ENCODE measurements at regions of chr5 and their contacts with region 1.

Region 1: GRCh38 chr5:90558344-90559192 is at the start of gene ADGRV1:
- DNase-seq: peak; percentile 96 to 97
- H3K4me3 ChIP-seq: peak within 1 kb of the TSS; percentile 65
- H3K4me3 Mint-ChIP-seq: peak within 1 kb of the TSS; percentile 93
- H3K27ac Mint-ChIP-seq: peak within 1 kb of the TSS; percentile 70
- H3K4me1 ChIP-seq: peaks cover 20% of the 10 kb centered on the region
- H3K4me1 Mint-ChIP-seq: peaks cover 30% of the 10 kb centered on the region
- H3K27me3 ChIP-seq: no peaks in the 10 kb centered on the region
- H3K27me3 Mint-ChIP-seq: no peaks in the 10 kb centered on the region
- CTCF ChIP-seq: no peak
- total RNA-seq, gene ADGRV1: 23.2 and 31.1 TPM in 2 replicates

Region 2: GRCh38 chr5:89954916-89955315 is 603.7 kb before region 1 on chr5:
- CTCF ChIA-PET with region 1: no interaction called
- POLR2A ChIA-PET with region 1: no interaction called
- intact Hi-C with region 1: no loop called
- DNase-seq: no peak
- H3K4me3 ChIP-seq: no peak overlapping the region
- H3K4me3 Mint-ChIP-seq: no peak overlapping the region
- H3K27ac Mint-ChIP-seq: no peak overlapping the region
- H3K4me1 ChIP-seq: no peaks in the 10 kb centered on the region
- H3K4me1 Mint-ChIP-seq: no peaks in the 10 kb centered on the region
- H3K27me3 ChIP-seq: no peaks in the 10 kb centered on the region
- H3K27me3 Mint-ChIP-seq: no peaks in the 10 kb centered on the region
- CTCF ChIP-seq: no peak

Region 3: GRCh38 chr5:90534922-90535321 is 23.6 kb before region 1 on chr5:
- CTCF ChIA-PET with region 1: no interaction called
- POLR2A ChIA-PET with region 1: no interaction called
- intact Hi-C with region 1: loop called (anchors 1 kb)
- DNase-seq: no peak
- H3K4me3 ChIP-seq: no peak overlapping the region
- H3K4me3 Mint-ChIP-seq: no peak overlapping the region
- H3K27ac Mint-ChIP-seq: no peak overlapping the region
- H3K4me1 ChIP-seq: peaks cover 18% of the 10 kb centered on the region
- H3K4me1 Mint-ChIP-seq: peaks cover 14% of the 10 kb centered on the region
- H3K27me3 ChIP-seq: no peaks in the 10 kb centered on the region
- H3K27me3 Mint-ChIP-seq: no peaks in the 10 kb centered on the region
- CTCF ChIP-seq: no peak

Region 4: GRCh38 chr5:90548069-90548593 is 10.4 kb before region 1 on chr5:
- CTCF ChIA-PET with region 1: no interaction called
- POLR2A ChIA-PET with region 1: no interaction called
- intact Hi-C with region 1: loop called (anchors 1 kb)
- DNase-seq: peak; percentile 75 to 76
- H3K4me3 ChIP-seq: no peak overlapping the region
- H3K4me3 Mint-ChIP-seq: no peak overlapping the region
- H3K27ac Mint-ChIP-seq: peak overlapping the region; percentile 46
- H3K4me1 ChIP-seq: peaks cover 26% of the 10 kb centered on the region
- H3K4me1 Mint-ChIP-seq: peaks cover 4% of the 10 kb centered on the region
- H3K27me3 ChIP-seq: no peaks in the 10 kb centered on the region
- H3K27me3 Mint-ChIP-seq: no peaks in the 10 kb centered on the region
- CTCF ChIP-seq: no peak

Region 5: DNA sequence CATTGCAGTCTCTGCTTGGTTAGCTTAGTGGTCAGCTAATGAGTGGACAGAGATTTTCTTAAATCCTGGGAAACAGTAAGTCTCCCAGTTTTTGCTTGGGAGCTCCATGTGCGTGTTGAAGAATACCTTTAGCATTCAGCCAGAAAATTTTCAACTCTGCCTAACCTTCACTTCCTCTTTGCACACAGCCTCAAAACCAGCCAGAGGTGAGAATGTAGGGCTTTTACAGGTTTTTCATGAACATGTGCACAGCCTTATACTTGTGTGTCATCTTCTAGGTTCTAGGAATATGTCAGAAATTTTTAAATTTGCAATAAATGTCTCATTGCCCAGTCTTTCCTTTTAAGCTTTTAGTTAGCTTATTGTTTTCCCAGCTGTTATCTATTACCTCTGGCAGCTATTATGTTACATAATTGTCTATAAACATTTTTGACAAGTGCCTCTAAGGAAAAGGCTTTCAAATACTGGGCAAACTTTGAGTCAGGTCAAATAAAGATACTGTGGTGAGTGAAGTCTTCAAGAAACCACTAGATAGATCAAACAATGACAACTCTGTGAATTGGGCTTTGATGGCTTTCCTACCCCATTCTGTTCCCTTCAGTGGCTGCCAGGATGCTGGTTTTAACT is 12.7 kb after region 1 on chr5:
- CTCF ChIA-PET with region 1: no interaction called
- POLR2A ChIA-PET with region 1: no interaction called
- intact Hi-C with region 1: loop called (anchors 2 kb)
- DNase-seq: no peak
- H3K4me3 ChIP-seq: no peak overlapping the region
- H3K4me3 Mint-ChIP-seq: no peak overlapping the region
- H3K27ac Mint-ChIP-seq: no peak overlapping the region
- H3K4me1 ChIP-seq: peaks cover 7% of the 10 kb centered on the region; the same call in 1 of the 2 replicates
- H3K4me1 Mint-ChIP-seq: no peaks in the 10 kb centered on the region
- H3K27me3 ChIP-seq: no peaks in the 10 kb centered on the region
- H3K27me3 Mint-ChIP-seq: peaks cover 3% of the 10 kb centered on the region
- CTCF ChIP-seq: no peak

Region 6: GRCh38 chr5:90632791-90633190 is 74.2 kb after region 1 on chr5:
- CTCF ChIA-PET with region 1: no interaction called
- POLR2A ChIA-PET with region 1: no interaction called
- intact Hi-C with region 1: no loop called
- DNase-seq: no peak
- H3K4me3 ChIP-seq: no peak overlapping the region
- H3K4me3 Mint-ChIP-seq: no peak overlapping the region
- H3K27ac Mint-ChIP-seq: no peak overlapping the region
- H3K4me1 ChIP-seq: no peaks in the 10 kb centered on the region
- H3K4me1 Mint-ChIP-seq: no peaks in the 10 kb centered on the region
- H3K27me3 ChIP-seq: no peaks in the 10 kb centered on the region
- H3K27me3 Mint-ChIP-seq: no peaks in the 10 kb centered on the region
- CTCF ChIP-seq: no peak

Region 7: DNA sequence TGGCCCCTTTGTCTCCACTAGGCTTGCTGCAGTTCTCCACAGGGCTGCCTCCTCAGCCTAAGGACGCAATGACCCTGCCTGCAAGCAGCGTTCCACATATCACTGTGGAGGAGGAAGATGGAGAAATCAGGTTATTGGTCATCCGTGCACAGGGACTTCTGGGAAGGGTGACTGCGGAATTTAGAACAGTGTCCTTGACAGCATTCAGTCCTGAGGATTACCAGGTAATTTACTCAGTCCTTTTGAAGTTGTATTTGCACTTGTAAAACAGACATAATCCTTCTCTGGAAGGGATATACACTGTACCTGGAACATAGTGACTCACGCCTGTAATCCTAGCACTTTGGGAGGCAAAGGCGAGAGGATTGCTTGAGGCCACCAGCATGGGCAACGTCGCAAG is 116.7 kb after region 1 on chr5:
- CTCF ChIA-PET with region 1: no interaction called
- POLR2A ChIA-PET with region 1: no interaction called
- intact Hi-C with region 1: loop called (anchors 5 kb)
- DNase-seq: peak; percentile 73 to 79
- H3K4me3 ChIP-seq: no peak overlapping the region
- H3K4me3 Mint-ChIP-seq: peak overlapping the region; percentile 60
- H3K27ac Mint-ChIP-seq: no peak overlapping the region
- H3K4me1 ChIP-seq: peaks cover 9% of the 10 kb centered on the region
- H3K4me1 Mint-ChIP-seq: peaks cover 10% of the 10 kb centered on the region
- H3K27me3 ChIP-seq: no peaks in the 10 kb centered on the region
- H3K27me3 Mint-ChIP-seq: no peaks in the 10 kb centered on the region
- CTCF ChIP-seq: no peak

Region 8: DNA sequence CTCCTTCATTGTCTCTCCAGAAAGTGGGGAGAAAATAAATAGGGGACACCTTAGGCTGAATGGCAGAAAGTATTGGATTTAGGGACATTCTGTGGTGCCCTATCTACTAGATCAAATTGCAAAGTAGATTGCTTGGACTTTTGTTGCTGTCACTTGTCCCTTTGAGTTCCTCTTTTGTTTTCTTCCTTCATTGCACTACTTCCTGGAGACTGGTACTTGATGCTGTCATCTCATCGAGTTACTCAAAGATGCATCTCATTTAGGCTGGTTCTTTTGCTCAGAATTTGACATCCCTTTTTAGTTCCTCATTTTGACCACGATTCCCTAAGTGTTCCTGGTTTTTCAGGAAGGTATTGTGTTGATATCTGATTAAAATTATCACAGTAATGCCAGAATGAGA is 137.6 kb after region 1 on chr5:
- CTCF ChIA-PET with region 1: no interaction called
- POLR2A ChIA-PET with region 1: no interaction called
- intact Hi-C with region 1: no loop called
- DNase-seq: no peak
- H3K4me3 ChIP-seq: no peak overlapping the region
- H3K4me3 Mint-ChIP-seq: no peak overlapping the region
- H3K27ac Mint-ChIP-seq: no peak overlapping the region
- H3K4me1 ChIP-seq: no peaks in the 10 kb centered on the region
- H3K4me1 Mint-ChIP-seq: no peaks in the 10 kb centered on the region
- H3K27me3 ChIP-seq: no peaks in the 10 kb centered on the region
- H3K27me3 Mint-ChIP-seq: peaks cover 4% of the 10 kb centered on the region
- CTCF ChIP-seq: no peak

Measured in Caco-2 (cell line).